ENCODE measurements at regions of chr6 and their contacts with region 1.

Region 1: GRCh38 chr6:109690737-109691621 is at the starts of genes AK9 and FIG4:
- DNase-seq: peak; percentile 72 to 88 (median 83)
- ATAC-seq: peak; percentile 98
- H3K4me3 ChIP-seq: peak within 1 kb of the TSS; percentile 98
- H3K4me3 Mint-ChIP-seq: peak within 1 kb of the TSS; percentile 91 to 100 (median 96)
- H3K27ac ChIP-seq: peak within 1 kb of the TSS; percentile 74
- H3K27ac Mint-ChIP-seq: peak within 1 kb of the TSS; percentile 92 to 99 (median 96)
- H3K4me1 ChIP-seq: peaks cover 12 to 13% of the 10 kb centered on the region in 2 donors
- H3K4me1 Mint-ChIP-seq: peaks cover 21 to 48% (median 34%) of the 10 kb centered on the region in 7 donors
- H3K27me3 ChIP-seq: no peaks in the 10 kb centered on the region
- H3K27me3 Mint-ChIP-seq: peaks cover 0 to 13% (median 0%) of the 10 kb centered on the region in 5 donors
- total RNA-seq, gene AK9: 5.8 to 19.5 (median 11.5) TPM
- total RNA-seq, gene FIG4: 6.8 to 16.5 (median 13.0) TPM

Region 2: GRCh38 chr6:107716688-107717089 is 1974.3 kb before region 1 on chr6:
- CTCF ChIA-PET with region 1: no interaction called
- POLR2A ChIA-PET with region 1: no interaction called
- intact Hi-C with region 1: loop called in 1 of 2 experiments (anchors 5 kb)
- DNase-seq: peak; percentile 27 to 89 (median 85)
- ATAC-seq: peak; percentile 95
- H3K4me3 ChIP-seq: no peak overlapping the region
- H3K4me3 Mint-ChIP-seq: peak overlapping the region; percentile 43 to 81 (median 72)
- H3K27ac ChIP-seq: peak overlapping the region; percentile 49
- H3K27ac Mint-ChIP-seq: peak overlapping the region; percentile 82 to 97 (median 92)
- H3K4me1 ChIP-seq: peaks cover 47 to 57% of the 10 kb centered on the region in 2 donors
- H3K4me1 Mint-ChIP-seq: peaks cover 46 to 86% (median 74%) of the 10 kb centered on the region in 7 donors
- H3K27me3 ChIP-seq: no peaks in the 10 kb centered on the region
- H3K27me3 Mint-ChIP-seq: no peaks in the 10 kb centered on the region

Region 3: DNA sequence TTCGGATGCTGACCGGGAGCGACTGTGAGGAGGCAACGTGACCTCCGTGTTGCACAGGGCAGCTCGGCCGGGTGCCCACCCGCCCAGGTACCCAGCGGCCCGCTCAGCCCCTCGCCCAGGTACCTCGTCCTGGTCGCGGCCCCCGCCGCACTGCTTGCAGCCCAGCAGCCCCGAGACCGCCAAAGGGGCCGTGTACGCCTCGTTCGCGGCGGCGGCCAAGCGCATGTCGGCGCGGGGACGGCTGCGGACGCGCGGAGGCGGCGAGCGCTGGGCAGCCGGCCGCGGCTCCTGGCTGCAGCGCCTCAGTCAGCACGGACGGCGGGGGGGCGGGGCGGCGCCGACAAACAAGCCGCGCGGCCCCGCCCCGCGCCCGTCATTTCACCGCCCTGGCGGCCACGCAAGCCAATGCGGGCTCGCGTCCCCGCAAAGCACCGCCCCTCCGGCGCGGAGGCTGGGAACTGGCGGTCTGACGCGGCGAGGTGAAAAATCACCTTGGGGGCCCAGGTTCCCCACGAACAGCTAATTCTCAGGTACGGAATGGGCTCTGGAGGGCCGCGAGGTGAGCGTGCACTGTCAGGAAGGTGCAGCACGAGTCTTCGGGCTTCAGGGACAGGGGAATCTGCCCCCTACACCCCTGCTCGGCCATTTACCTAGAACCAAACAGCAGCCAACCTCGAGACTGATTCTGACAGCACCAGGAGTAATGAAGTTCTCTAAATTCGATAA is 681.6 kb before region 1 on chr6:
- CTCF ChIA-PET with region 1: no interaction called
- POLR2A ChIA-PET with region 1: no interaction called
- intact Hi-C with region 1: loop called in 1 of 2 experiments (anchors 1 kb)
- DNase-seq: peak; percentile 85 to 91 (median 90)
- ATAC-seq: peak; percentile 98
- H3K4me3 ChIP-seq: peak overlapping the region; percentile 84
- H3K4me3 Mint-ChIP-seq: peak overlapping the region; percentile 91 to 99 (median 96)
- H3K27ac ChIP-seq: peak overlapping the region; percentile 99
- H3K27ac Mint-ChIP-seq: peak overlapping the region; percentile 94 to 100 (median 98)
- H3K4me1 ChIP-seq: peaks cover 22 to 40% of the 10 kb centered on the region in 2 donors
- H3K4me1 Mint-ChIP-seq: peaks cover 26 to 81% (median 72%) of the 10 kb centered on the region in 7 donors
- H3K27me3 ChIP-seq: no peaks in the 10 kb centered on the region
- H3K27me3 Mint-ChIP-seq: peaks cover 0 to 3% (median 0%) of the 10 kb centered on the region in 5 donors

Region 4: DNA sequence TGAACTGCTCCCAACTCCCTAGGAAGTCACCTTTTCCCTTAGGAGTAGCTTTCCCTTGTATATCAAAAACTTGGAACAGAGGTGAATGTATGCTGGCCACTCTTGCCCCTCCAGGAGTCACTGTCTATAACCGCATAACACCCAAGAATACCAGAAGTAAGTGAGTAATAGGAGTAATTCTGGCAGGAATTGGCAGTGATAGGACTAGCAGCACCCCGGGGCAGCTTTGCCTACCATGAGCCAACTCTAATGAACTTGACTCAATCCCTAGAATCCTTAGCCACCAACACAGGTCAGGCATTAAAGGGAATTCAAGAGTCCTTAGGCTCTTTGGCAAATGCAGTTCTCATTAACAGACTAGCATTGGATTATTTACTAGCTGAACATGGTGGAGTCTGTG is 279.9 kb before region 1 on chr6:
- CTCF ChIA-PET with region 1: no interaction called
- POLR2A ChIA-PET with region 1: no interaction called
- intact Hi-C with region 1: no loop called
- DNase-seq: no peak
- ATAC-seq: no peak
- H3K4me3 ChIP-seq: no peak overlapping the region
- H3K4me3 Mint-ChIP-seq: no peak overlapping the region
- H3K27ac ChIP-seq: no peak overlapping the region
- H3K27ac Mint-ChIP-seq: no peak overlapping the region
- H3K4me1 ChIP-seq: no peaks in the 10 kb centered on the region
- H3K4me1 Mint-ChIP-seq: no peaks in the 10 kb centered on the region
- H3K27me3 ChIP-seq: no peaks in the 10 kb centered on the region
- H3K27me3 Mint-ChIP-seq: peaks cover 0 to 44% (median 0%) of the 10 kb centered on the region in 5 donors

Region 5: GRCh38 chr6:109455502-109456282 is 235.3 kb before region 1 on chr6 and contains the start of gene MICAL1:
- CTCF ChIA-PET with region 1: no interaction called
- POLR2A ChIA-PET with region 1: no interaction called
- intact Hi-C with region 1: loop called in 1 of 2 experiments (anchors 1 kb)
- DNase-seq: peak; percentile 55 to 79 (median 72)
- ATAC-seq: peak; percentile 82
- H3K4me3 ChIP-seq: peak within 1 kb of the TSS; percentile 81
- H3K4me3 Mint-ChIP-seq: peak within 1 kb of the TSS; percentile 95 to 99 (median 97)
- H3K27ac ChIP-seq: peak within 1 kb of the TSS; percentile 94
- H3K27ac Mint-ChIP-seq: peak within 1 kb of the TSS; percentile 83 to 99 (median 97)
- H3K4me1 ChIP-seq: peaks cover 40 to 45% of the 10 kb centered on the region in 2 donors
- H3K4me1 Mint-ChIP-seq: peaks cover 29 to 68% (median 62%) of the 10 kb centered on the region in 7 donors
- H3K27me3 ChIP-seq: no peaks in the 10 kb centered on the region
- H3K27me3 Mint-ChIP-seq: no peaks in the 10 kb centered on the region
- total RNA-seq, gene MICAL1: 61.4 to 125 (median 78.7) TPM

Region 6: DNA sequence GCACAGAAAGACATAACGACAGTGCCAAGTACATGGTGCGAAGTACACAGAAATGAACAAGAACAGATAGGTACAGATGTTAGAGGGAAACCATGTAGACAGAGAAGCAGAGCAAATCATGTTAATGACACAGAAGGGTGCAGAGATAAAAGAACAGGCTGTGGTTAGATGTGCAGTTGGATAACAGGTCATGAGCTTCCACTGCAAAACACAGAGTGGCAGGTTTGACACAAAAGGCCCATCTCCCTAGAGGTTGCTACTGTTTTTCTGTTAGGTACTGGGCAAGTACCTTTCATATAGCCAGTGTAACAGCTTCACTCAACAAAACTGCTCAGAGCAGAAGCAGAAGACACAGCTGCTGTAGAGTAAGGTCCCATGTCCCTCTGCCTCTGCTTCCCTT is 84.6 kb before region 1 on chr6:
- CTCF ChIA-PET with region 1: no interaction called
- POLR2A ChIA-PET with region 1: no interaction called
- intact Hi-C with region 1: loop called in 1 of 2 experiments (anchors 5 kb)
- DNase-seq: peak in 7 of 9 donors; percentile 13 to 72 (median 62)
- ATAC-seq: peak; percentile 86
- H3K4me3 ChIP-seq: no peak overlapping the region
- H3K4me3 Mint-ChIP-seq: peak overlapping the region in 2 of 10 donors; percentile 5 to 65
- H3K27ac ChIP-seq: no peak overlapping the region
- H3K27ac Mint-ChIP-seq: peak overlapping the region in 7 of 9 donors; percentile 10 to 81 (median 50)
- H3K4me1 ChIP-seq: peaks cover 0 to 12% of the 10 kb centered on the region in 2 donors
- H3K4me1 Mint-ChIP-seq: peaks cover 8 to 37% (median 24%) of the 10 kb centered on the region in 7 donors
- H3K27me3 ChIP-seq: no peaks in the 10 kb centered on the region
- H3K27me3 Mint-ChIP-seq: no peaks in the 10 kb centered on the region

Region 7: GRCh38 chr6:110815217-110816109 is 1124.5 kb after region 1 on chr6 and contains the start of gene CDK19:
- CTCF ChIA-PET with region 1: no interaction called
- POLR2A ChIA-PET with region 1: interaction called, 5 read pairs
- intact Hi-C with region 1: loop called (anchors 1 to 2 kb)
- DNase-seq: peak; percentile 94 to 99 (median 99)
- ATAC-seq: peak; percentile 87
- H3K4me3 ChIP-seq: peak within 1 kb of the TSS; percentile 97
- H3K4me3 Mint-ChIP-seq: peak within 1 kb of the TSS; percentile 94 to 100 (median 98)
- H3K27ac ChIP-seq: peak within 1 kb of the TSS; percentile 89
- H3K27ac Mint-ChIP-seq: peak within 1 kb of the TSS; percentile 89 to 100 (median 99)
- H3K4me1 ChIP-seq: peaks cover 11 to 15% of the 10 kb centered on the region in 2 donors
- H3K4me1 Mint-ChIP-seq: peaks cover 14 to 46% (median 26%) of the 10 kb centered on the region in 7 donors
- H3K27me3 ChIP-seq: no peaks in the 10 kb centered on the region
- H3K27me3 Mint-ChIP-seq: no peaks in the 10 kb centered on the region
- total RNA-seq, gene CDK19: 11.3 to 24.4 (median 21.0) TPM

Measured in naive thymus-derived CD4-positive, alpha-beta T cell (primary cell).